ENCODE measurements at regions of chr6 and their contacts with region 1.

Region 1: GRCh38 chr6:167119670-167120381 is 3.1 kb upstream of the CCR6 start:
- DNase-seq: peak; percentile 69
- H3K4me3 ChIP-seq: no peak overlapping the region
- H3K27ac ChIP-seq: peak overlapping the region; percentile 7
- H3K4me1 ChIP-seq: peaks cover 89% of the 10 kb centered on the region
- CTCF ChIP-seq: peak; percentile 80

Region 2: DNA sequence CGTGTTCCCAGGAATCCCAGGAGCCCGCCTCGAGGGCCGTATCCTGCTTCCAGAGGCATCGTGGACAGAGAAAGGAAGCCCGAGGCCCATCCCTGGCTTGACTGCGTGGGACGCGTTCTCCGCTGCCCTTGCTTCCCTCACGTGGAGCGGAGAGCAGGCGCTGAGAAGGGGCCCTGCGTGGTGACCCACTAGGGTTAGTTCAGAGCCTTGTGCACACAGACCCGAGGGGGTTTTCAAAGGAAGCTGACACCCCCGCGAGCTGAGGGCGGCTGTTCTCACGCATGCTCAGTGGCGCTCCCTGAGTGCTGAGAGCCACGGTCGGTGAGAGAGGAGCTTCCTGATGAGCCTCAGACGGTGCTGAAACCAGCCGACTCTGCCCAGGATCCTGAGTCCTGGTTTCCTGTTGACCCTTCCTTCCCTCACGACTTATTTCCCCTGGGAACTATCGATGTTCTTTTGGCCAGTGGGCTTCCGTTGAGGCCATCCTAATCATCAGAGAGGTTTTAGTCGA is 25.8 kb before region 1 on chr6:
- CTCF ChIA-PET with region 1: interaction called, 7 read pairs
- POLR2A ChIA-PET with region 1: interaction called, 96 read pairs
- intact Hi-C with region 1: no loop called
- DNase-seq: no peak
- H3K4me3 ChIP-seq: peak overlapping the region; percentile 44
- H3K27ac ChIP-seq: peak overlapping the region; percentile 72
- H3K4me1 ChIP-seq: peaks cover 92% of the 10 kb centered on the region
- CTCF ChIP-seq: no peak

Region 3: GRCh38 chr6:167130008-167130677 is 10.3 kb after region 1 on chr6:
- CTCF ChIA-PET with region 1: no interaction called
- POLR2A ChIA-PET with region 1: interaction called, 34 read pairs
- intact Hi-C with region 1: no loop called
- DNase-seq: peak; percentile 77
- H3K4me3 ChIP-seq: no peak overlapping the region
- H3K27ac ChIP-seq: peak overlapping the region; percentile 33
- H3K4me1 ChIP-seq: peaks cover 29% of the 10 kb centered on the region
- CTCF ChIP-seq: no peak

Measured in OCI-LY7 (cell line).